B cell (primary cell): ENCODE measurements at regions of chr2 and their contacts with region 1.

Region 1: GRCh38 chr2:88880441-88880953 is 189.0 kb downstream of the RPIA start:
- DNase-seq: peak; percentile 72
- ATAC-seq: peak; percentile 72
- H3K4me3 ChIP-seq: peak overlapping the region in 4 of 5 experiments; percentile 19 to 56 (median 42)
- H3K4me3 Mint-ChIP-seq: peak overlapping the region; percentile 78
- H3K27ac ChIP-seq: peak overlapping the region; percentile 73 to 83
- H3K27ac Mint-ChIP-seq: peak overlapping the region; percentile 87
- H3K4me1 ChIP-seq: peaks cover 29 to 56% of the 10 kb centered on the region in 2 donors
- H3K4me1 Mint-ChIP-seq: peaks cover 54% of the 10 kb centered on the region
- H3K27me3 ChIP-seq: no peaks in the 10 kb centered on the region
- H3K27me3 Mint-ChIP-seq: no peaks in the 10 kb centered on the region
- CTCF ChIP-seq: peak; percentile 62

Region 2: DNA sequence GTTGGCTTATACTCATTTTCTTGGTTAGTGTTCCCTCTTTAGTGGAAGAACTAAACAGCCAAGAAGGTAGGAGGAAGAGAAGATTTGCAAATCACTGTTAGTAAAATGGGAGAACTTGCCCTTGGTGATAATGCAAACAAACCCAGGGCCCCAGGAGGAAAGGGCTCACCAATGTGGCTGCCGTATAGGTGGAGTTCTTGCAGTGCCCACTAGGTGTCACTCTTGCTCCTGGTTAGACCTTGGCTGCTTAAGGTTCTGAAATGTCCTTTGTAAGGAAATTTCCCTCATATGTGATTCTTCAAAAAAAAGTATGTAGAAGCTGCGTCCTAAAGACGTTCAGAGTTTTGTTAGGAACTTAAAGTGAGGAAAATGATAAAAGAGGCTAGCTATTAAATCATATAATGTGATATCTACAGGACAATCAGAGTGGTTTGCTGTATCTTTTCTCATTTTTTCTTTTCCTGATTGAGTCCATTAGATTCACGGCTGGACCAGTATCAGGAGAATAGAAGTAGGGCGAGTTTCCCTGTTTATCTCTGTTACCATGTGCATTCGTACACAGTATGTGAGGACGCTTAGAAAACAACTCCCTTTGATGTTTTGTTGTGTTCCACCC is 140.4 kb before region 1 on chr2:
- CTCF ChIA-PET with region 1: interaction called, 12 read pairs
- POLR2A ChIA-PET with region 1: no interaction called
- intact Hi-C with region 1: loop called (anchors 5 kb)
- DNase-seq: peak; percentile 84
- ATAC-seq: peak; percentile 92
- H3K4me3 ChIP-seq: no peak overlapping the region
- H3K4me3 Mint-ChIP-seq: no peak overlapping the region
- H3K27ac ChIP-seq: no peak overlapping the region
- H3K27ac Mint-ChIP-seq: peak overlapping the region; percentile 3
- H3K4me1 ChIP-seq: peaks cover 0 to 5% of the 10 kb centered on the region in 2 donors
- H3K4me1 Mint-ChIP-seq: peaks cover 3% of the 10 kb centered on the region
- H3K27me3 ChIP-seq: no peaks in the 10 kb centered on the region
- H3K27me3 Mint-ChIP-seq: no peaks in the 10 kb centered on the region
- CTCF ChIP-seq: peak; percentile 96

Region 3: DNA sequence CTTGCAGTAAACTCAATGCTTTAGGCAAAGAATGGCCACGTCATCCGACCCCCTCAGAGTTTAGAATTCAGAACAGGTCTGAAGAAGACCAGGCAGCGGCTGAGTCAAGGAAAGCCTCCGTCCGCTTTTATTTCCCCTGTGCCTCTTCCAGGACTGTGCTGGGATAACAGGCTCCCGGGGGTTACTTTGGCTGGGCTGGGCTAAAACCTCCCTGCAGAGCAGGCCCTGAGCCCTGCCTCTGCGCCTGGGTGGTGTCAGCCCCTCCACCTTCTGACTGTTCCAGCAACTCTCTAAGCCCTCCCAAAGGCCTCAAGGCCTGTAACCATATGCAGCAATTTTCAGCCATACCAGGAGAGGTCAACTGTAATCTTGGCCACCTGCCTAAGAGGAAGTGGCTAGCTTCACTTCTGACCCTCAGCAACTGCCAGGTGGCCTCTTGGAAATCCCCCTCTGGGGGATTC is 22.5 kb before region 1 on chr2:
- CTCF ChIA-PET with region 1: interaction called, 30 read pairs
- POLR2A ChIA-PET with region 1: interaction called, 22 read pairs
- intact Hi-C with region 1: no loop called
- DNase-seq: peak; percentile 75
- ATAC-seq: peak; percentile 37
- H3K4me3 ChIP-seq: peak overlapping the region; percentile 62 to 95 (median 86)
- H3K4me3 Mint-ChIP-seq: peak overlapping the region; percentile 93
- H3K27ac ChIP-seq: peak overlapping the region; percentile 90 to 98
- H3K27ac Mint-ChIP-seq: peak overlapping the region; percentile 92
- H3K4me1 ChIP-seq: peaks cover 38 to 43% of the 10 kb centered on the region in 2 donors
- H3K4me1 Mint-ChIP-seq: peaks cover 54% of the 10 kb centered on the region
- H3K27me3 ChIP-seq: no peaks in the 10 kb centered on the region
- H3K27me3 Mint-ChIP-seq: no peaks in the 10 kb centered on the region
- CTCF ChIP-seq: no peak

Region 4: GRCh38 chr2:88865801-88866371 is 14.6 kb before region 1 on chr2:
- CTCF ChIA-PET with region 1: interaction called, 30 read pairs
- POLR2A ChIA-PET with region 1: interaction called, 22 read pairs
- intact Hi-C with region 1: loop called (anchors 2 kb)
- DNase-seq: peak; percentile 69
- ATAC-seq: peak; percentile 84
- H3K4me3 ChIP-seq: peak overlapping the region; percentile 66 to 90 (median 81)
- H3K4me3 Mint-ChIP-seq: peak overlapping the region; percentile 93
- H3K27ac ChIP-seq: peak overlapping the region; percentile 77 to 90
- H3K27ac Mint-ChIP-seq: peak overlapping the region; percentile 94
- H3K4me1 ChIP-seq: peaks cover 6 to 20% of the 10 kb centered on the region in 2 donors
- H3K4me1 Mint-ChIP-seq: peaks cover 42% of the 10 kb centered on the region
- H3K27me3 ChIP-seq: no peaks in the 10 kb centered on the region
- H3K27me3 Mint-ChIP-seq: no peaks in the 10 kb centered on the region
- CTCF ChIP-seq: no peak

Region 5: DNA sequence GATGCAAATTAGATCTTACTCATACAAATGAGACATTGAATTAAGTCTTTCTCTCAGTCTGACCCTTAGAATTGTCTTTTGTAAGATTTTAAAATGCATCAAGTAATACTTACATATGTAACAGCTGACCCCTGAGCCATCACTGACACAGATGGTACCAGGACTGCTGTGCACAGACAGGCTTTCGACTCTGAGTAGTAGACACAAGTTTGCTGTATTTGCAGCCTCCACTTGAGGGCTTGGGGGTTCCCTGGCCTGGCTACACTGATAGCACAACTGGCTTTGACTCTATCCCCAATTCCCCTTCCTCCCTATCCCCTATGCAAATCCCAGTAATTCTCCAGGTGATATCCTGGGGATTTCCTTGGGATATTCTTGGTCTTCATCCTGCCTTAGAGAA is 11.7 kb after region 1 on chr2:
- CTCF ChIA-PET with region 1: interaction called, 75 read pairs
- POLR2A ChIA-PET with region 1: interaction called, 8 read pairs
- intact Hi-C with region 1: no loop called
- DNase-seq: no peak
- ATAC-seq: no peak
- H3K4me3 ChIP-seq: no peak overlapping the region
- H3K4me3 Mint-ChIP-seq: no peak overlapping the region
- H3K27ac ChIP-seq: no peak overlapping the region
- H3K27ac Mint-ChIP-seq: peak overlapping the region; percentile 56
- H3K4me1 ChIP-seq: peaks cover 6 to 7% of the 10 kb centered on the region in 2 donors
- H3K4me1 Mint-ChIP-seq: peaks cover 20% of the 10 kb centered on the region
- H3K27me3 ChIP-seq: no peaks in the 10 kb centered on the region
- H3K27me3 Mint-ChIP-seq: no peaks in the 10 kb centered on the region
- CTCF ChIP-seq: no peak

Region 6: DNA sequence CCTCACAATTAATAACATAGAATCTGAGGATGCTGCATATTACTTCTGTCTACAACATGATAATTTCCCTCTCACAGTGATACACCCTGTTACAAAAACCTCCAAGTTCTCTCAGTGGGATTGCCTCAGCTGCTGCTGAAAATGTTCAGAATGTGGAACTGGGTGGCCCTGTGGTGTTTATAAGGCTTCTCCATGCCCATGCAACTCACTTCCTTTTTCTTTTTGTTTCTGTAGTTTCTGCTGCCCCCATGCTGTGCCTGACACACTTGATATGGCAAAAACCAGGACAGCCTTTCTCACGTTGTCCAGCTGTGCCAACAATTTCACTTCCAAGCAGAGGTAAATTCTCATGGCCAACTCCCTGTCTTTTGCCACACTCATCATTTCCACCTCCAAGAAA is 17.2 kb after region 1 on chr2:
- CTCF ChIA-PET with region 1: interaction called, 75 read pairs
- POLR2A ChIA-PET with region 1: interaction called, 8 read pairs
- intact Hi-C with region 1: loop called (anchors 2 kb)
- DNase-seq: peak; percentile 46
- ATAC-seq: peak; percentile 77
- H3K4me3 ChIP-seq: no peak overlapping the region
- H3K4me3 Mint-ChIP-seq: peak overlapping the region; percentile 62
- H3K27ac ChIP-seq: no peak overlapping the region
- H3K27ac Mint-ChIP-seq: peak overlapping the region; percentile 75
- H3K4me1 ChIP-seq: peaks cover 14 to 17% of the 10 kb centered on the region in 2 donors
- H3K4me1 Mint-ChIP-seq: peaks cover 18% of the 10 kb centered on the region
- H3K27me3 ChIP-seq: no peaks in the 10 kb centered on the region
- H3K27me3 Mint-ChIP-seq: no peaks in the 10 kb centered on the region
- CTCF ChIP-seq: peak; percentile 9

Region 7: DNA sequence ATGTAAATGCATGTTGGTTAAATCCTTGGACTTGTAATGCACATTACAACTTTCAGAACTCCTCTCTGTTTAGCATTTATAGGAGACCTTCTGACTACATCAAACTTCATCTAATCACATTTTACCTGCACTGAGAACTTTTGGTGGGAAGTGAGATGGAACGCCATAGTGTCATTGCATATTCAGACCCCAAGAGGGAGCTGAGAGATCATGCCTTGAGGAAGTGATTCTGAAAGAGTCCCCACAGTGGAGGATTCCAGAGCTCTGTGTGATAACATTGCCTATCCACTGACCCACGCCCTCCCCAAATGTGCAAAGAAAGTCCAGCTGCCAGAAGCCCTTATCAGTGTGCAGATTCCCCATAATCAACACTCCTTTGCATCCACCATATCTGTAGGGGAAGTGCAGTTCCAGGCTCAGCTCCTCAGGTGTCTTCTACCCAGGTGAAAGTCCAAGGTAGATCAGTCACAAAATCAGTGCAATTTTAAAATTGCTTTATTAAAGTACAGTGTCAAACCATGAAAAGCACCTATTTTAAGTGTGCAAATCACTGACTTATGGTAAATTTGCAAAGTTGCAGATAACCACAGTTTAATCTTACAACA is 23.4 kb after region 1 on chr2:
- CTCF ChIA-PET with region 1: interaction called, 75 read pairs
- POLR2A ChIA-PET with region 1: no interaction called
- intact Hi-C with region 1: loop called (anchors 2 kb)
- DNase-seq: peak; percentile 61
- ATAC-seq: peak; percentile 67
- H3K4me3 ChIP-seq: no peak overlapping the region
- H3K4me3 Mint-ChIP-seq: no peak overlapping the region
- H3K27ac ChIP-seq: no peak overlapping the region
- H3K27ac Mint-ChIP-seq: no peak overlapping the region
- H3K4me1 ChIP-seq: no peaks in the 10 kb centered on the region
- H3K4me1 Mint-ChIP-seq: peaks cover 4% of the 10 kb centered on the region
- H3K27me3 ChIP-seq: no peaks in the 10 kb centered on the region
- H3K27me3 Mint-ChIP-seq: no peaks in the 10 kb centered on the region
- CTCF ChIP-seq: peak; percentile 62